Activated naive CD4-positive, alpha-beta T cell treated with anti-CD3 and anti-CD28 coated beads for 36 hours (primary cell): ENCODE measurements at regions of chr2 and their contacts with region 1.

Region 1: GRCh38 chr2:113173542-113174395 is at the start of gene PSD4:
- DNase-seq: peak; percentile 96
- H3K4me3 Mint-ChIP-seq: peak within 1 kb of the TSS; percentile 95
- H3K27ac Mint-ChIP-seq: peak within 1 kb of the TSS; percentile 97
- H3K4me1 Mint-ChIP-seq: peaks cover 77% of the 10 kb centered on the region
- H3K27me3 Mint-ChIP-seq: no peaks in the 10 kb centered on the region
- total RNA-seq, gene PSD4: 85.9 to 87.4 TPM

Region 2: DNA sequence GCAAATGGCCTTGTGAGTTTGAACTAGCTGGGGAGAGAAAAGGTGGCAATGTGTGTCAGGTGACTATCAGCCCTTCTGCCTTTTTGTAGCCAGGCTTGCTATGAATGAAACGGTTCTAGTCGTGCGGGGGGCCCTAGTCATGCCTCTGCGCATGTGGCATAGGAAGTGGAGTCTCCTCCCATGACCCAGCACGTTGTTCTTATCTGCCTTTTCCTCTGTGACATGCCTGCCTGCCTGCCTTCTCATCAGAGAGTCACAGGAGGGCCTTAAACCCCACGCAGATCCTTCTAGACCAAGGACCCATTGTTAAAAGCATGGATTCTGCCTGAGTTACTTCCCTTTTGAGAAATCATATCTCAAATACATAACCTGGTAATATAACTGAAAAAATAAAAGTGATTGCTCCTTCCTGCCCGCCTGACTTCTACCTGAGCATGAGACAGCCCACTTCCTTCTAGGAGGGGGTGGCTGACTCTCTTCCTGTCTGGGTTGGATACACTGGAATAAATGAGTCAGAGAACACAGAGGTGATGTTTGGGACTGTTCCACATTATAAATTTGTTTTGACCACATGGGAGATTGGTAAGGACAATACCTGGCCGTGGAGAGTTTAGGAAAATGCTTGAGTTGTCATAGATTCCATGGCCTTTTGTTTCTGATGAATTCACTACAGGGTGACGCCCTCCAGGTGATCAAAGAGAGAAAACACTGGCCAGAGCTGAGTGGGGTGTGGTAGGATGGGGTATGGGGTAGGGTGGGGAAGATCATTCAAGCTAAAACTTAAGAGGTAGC is 985.8 kb before region 1 on chr2:
- CTCF ChIA-PET with region 1: no interaction called
- intact Hi-C with region 1: loop called (anchors 5 kb)
- DNase-seq: peak; percentile 92
- H3K4me3 Mint-ChIP-seq: peak overlapping the region; percentile 63
- H3K27ac Mint-ChIP-seq: peak overlapping the region; percentile 99
- H3K4me1 Mint-ChIP-seq: peaks cover 87% of the 10 kb centered on the region
- H3K27me3 Mint-ChIP-seq: no peaks in the 10 kb centered on the region

Region 3: DNA sequence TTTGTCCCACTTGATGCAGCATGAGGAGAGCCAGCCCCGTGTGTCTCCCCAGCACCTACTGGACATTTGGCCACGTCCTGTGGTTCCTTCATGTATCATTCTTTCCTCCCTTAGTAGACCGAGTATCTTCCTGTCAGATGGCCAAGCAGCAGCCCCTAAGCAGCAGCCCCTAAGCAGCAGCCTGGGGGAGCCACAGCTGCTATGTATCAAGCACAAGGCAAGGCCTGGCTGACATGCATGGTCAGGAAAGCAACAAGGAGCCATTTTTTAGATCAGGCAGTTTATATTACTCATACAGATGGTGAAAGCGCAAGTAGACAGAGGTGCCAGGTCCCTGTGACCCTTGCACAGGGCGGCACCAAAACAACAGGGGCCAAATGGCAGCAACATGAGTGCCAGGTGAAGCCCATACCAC is 567.3 kb before region 1 on chr2:
- CTCF ChIA-PET with region 1: no interaction called
- intact Hi-C with region 1: no loop called
- DNase-seq: no peak
- H3K4me3 Mint-ChIP-seq: no peak overlapping the region
- H3K27ac Mint-ChIP-seq: no peak overlapping the region
- H3K4me1 Mint-ChIP-seq: no peaks in the 10 kb centered on the region
- H3K27me3 Mint-ChIP-seq: no peaks in the 10 kb centered on the region

Region 4: DNA sequence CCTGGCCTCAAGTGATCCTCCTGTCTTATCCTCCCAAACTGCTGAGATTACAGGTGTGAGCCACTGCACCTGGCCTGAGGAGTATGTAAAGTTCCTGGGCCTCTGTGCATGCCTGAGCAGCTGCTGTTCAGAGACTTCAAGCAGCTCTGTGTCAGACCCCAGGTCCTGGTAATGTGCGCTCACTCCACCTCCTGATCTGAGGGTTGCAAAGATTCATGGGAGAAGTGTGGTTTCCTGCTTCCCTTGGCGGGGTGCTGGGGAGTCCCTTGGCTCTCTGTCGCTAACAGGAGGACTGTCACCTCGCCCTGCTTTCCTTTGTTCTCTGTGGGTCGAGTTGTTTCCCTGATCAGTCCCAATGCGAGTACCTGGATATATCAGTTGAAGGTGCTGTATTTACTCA is 177.1 kb before region 1 on chr2:
- CTCF ChIA-PET with region 1: no interaction called
- intact Hi-C with region 1: loop called (anchors 2 kb)
- DNase-seq: peak; percentile 93
- H3K4me3 Mint-ChIP-seq: no peak overlapping the region
- H3K27ac Mint-ChIP-seq: peak overlapping the region; percentile 80
- H3K4me1 Mint-ChIP-seq: peaks cover 34% of the 10 kb centered on the region
- H3K27me3 Mint-ChIP-seq: no peaks in the 10 kb centered on the region

Region 5: GRCh38 chr2:113098041-113098440 is 75.7 kb before region 1 on chr2:
- CTCF ChIA-PET with region 1: interaction called, 3 read pairs
- intact Hi-C with region 1: loop called (anchors 1 kb)
- DNase-seq: peak; percentile 59
- H3K4me3 Mint-ChIP-seq: peak overlapping the region; percentile 50
- H3K27ac Mint-ChIP-seq: peak overlapping the region; percentile 79
- H3K4me1 Mint-ChIP-seq: peaks cover 19% of the 10 kb centered on the region
- H3K27me3 Mint-ChIP-seq: no peaks in the 10 kb centered on the region

Region 6: DNA sequence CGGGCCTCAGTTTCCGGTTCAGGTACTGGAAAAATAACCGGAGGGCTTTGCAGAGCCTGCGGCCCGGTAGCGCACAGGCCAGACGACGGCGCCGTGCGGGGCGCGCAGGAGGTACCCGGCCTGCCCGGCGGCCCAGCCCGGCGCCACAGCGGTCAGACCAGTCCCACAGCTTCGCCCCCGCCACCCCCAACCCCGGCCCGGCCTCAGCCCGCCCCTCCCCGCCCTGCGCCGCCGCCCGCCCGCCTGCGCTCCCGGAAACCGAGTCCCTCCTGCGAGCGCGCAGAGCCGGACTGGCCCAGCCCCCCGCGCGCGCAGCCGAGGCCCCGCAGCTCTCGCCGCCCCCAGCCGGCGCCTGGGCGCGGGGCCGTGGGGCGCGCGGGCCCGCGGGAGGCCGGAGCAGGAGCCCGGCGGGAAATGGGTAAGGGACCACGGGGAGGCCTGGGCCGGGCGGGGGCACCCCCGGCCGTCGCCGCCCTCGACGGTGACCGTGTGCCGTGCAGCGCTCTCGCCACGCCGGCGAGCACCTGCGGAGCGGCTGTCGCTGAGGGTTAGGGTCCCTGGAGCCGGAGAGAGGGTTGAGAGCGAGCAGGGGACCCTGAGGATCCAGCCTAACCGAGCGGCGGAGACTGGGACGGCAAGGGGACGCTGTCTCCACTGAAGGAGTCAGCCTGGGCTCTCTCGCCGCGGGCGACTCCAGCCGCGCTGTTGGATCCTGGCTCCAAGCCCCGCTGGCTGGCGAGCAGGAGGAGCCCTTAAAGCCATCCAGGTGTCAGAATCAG is 16.5 kb before region 1 on chr2:
- CTCF ChIA-PET with region 1: interaction called, 47 read pairs
- intact Hi-C with region 1: loop called (anchors 1 kb)
- DNase-seq: peak; percentile 67
- H3K4me3 Mint-ChIP-seq: peak overlapping the region; percentile 82
- H3K27ac Mint-ChIP-seq: peak overlapping the region; percentile 86
- H3K4me1 Mint-ChIP-seq: peaks cover 23% of the 10 kb centered on the region
- H3K27me3 Mint-ChIP-seq: no peaks in the 10 kb centered on the region

Region 7: GRCh38 chr2:113203901-113204519 is 30.2 kb after region 1 on chr2:
- CTCF ChIA-PET with region 1: interaction called, 11 read pairs
- intact Hi-C with region 1: loop called (anchors 1 kb)
- DNase-seq: peak; percentile 87
- H3K4me3 Mint-ChIP-seq: no peak overlapping the region
- H3K27ac Mint-ChIP-seq: peak overlapping the region; percentile 82
- H3K4me1 Mint-ChIP-seq: peaks cover 15% of the 10 kb centered on the region
- H3K27me3 Mint-ChIP-seq: no peaks in the 10 kb centered on the region